Gastrocnemius medialis (tissue), 4 donors: ENCODE measurements at regions of chr2 and their contacts with region 1.

Region 1: GRCh38 chr2:169734169-169734847 is 676 bp downstream of the KLHL23 start:
- DNase-seq: no peak
- ATAC-seq: peak; percentile 64 to 68
- H3K4me3 ChIP-seq: peak overlapping the region; percentile 57 to 66 (median 64)
- H3K27ac ChIP-seq: peak overlapping the region; percentile 41 to 63 (median 57)
- H3K4me1 ChIP-seq: peaks cover 5 to 19% of the 10 kb centered on the region in 2 donors
- H3K27me3 ChIP-seq: no peaks in the 10 kb centered on the region
- CTCF ChIP-seq: no peak
- POLR2A ChIP-seq: no peak

Region 2: GRCh38 chr2:169694113-169694903 is 40.0 kb before region 1 on chr2 and contains the starts of genes CFAP210 and PHOSPHO2:
- in situ Hi-C with region 1: no loop called
- intact Hi-C with region 1: loop called (anchors 2 kb)
- DNase-seq: peak; percentile 96 to 99
- ATAC-seq: peak; percentile 98 to 99
- H3K4me3 ChIP-seq: peak within 1 kb of the TSS; percentile 87 to 93 (median 88)
- H3K27ac ChIP-seq: peak within 1 kb of the TSS; percentile 83 to 90 (median 87)
- H3K4me1 ChIP-seq: peaks cover 13 to 14% of the 10 kb centered on the region in 2 donors
- H3K27me3 ChIP-seq: no peaks in the 10 kb centered on the region
- CTCF ChIP-seq: no peak
- POLR2A ChIP-seq: peak; percentile 74 to 77
- total RNA-seq, gene CFAP210: not detected
- total RNA-seq, gene PHOSPHO2: 2.0 to 9.4 (median 2.9) TPM

Region 3: DNA sequence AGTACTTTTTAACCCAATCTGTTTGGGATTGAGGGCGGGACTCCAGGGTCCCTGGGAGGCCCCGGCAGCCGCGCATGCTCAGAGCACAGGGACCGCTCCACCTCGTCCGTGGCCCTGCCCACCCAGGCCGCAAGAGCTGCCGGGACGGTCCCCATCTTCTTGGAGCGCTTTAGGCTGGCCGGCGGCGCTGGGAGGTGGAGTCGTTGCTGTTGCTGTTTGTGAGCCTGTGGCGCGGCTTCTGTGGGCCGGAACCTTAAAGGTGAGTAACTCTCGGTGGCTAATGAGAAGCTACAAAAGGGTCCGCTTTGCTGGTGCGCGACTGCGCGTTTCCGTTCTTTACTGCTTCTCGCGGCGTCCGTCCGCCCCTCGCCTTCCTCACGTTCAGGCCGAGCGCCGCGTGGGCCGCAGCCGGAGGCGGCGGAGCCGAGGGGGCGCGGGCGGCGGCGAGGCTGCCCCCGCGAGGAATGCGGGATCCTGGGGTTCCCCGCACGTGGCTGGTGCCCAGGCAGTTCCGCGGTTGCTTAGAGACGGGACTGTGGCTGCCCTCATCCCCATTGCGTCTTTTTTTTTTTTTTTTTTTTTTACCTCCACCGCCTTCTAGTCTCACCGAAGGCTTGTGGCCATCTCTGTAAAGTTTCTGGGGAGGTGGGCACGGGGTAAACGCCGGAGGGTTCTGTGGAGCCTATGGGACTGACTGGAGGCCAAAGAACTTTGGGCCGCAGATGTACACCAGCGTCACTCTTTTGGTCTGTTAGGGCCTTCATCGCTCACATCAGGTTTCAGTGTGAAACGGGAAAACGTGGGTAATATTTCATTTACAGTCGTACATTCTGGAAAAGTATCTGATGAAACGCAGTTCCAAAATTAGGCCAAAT is 64.6 kb after region 1 on chr2 and contains the start of gene SSB:
- in situ Hi-C with region 1: no loop called
- intact Hi-C with region 1: loop called (anchors 10 kb)
- DNase-seq: peak; percentile 85 to 86
- ATAC-seq: peak; percentile 94
- H3K4me3 ChIP-seq: peak within 1 kb of the TSS; percentile 72 to 97 (median 80)
- H3K27ac ChIP-seq: peak within 1 kb of the TSS; percentile 71 to 94 (median 82)
- H3K4me1 ChIP-seq: peaks cover 7 to 19% of the 10 kb centered on the region in 2 donors
- H3K27me3 ChIP-seq: no peaks in the 10 kb centered on the region
- CTCF ChIP-seq: no peak
- POLR2A ChIP-seq: peak; percentile 58 to 69
- total RNA-seq, gene SSB: 35.5 to 36.7 (median 36.1) TPM